ENCODE measurements at regions of chr4 and their contacts with region 1.

Region 1: DNA sequence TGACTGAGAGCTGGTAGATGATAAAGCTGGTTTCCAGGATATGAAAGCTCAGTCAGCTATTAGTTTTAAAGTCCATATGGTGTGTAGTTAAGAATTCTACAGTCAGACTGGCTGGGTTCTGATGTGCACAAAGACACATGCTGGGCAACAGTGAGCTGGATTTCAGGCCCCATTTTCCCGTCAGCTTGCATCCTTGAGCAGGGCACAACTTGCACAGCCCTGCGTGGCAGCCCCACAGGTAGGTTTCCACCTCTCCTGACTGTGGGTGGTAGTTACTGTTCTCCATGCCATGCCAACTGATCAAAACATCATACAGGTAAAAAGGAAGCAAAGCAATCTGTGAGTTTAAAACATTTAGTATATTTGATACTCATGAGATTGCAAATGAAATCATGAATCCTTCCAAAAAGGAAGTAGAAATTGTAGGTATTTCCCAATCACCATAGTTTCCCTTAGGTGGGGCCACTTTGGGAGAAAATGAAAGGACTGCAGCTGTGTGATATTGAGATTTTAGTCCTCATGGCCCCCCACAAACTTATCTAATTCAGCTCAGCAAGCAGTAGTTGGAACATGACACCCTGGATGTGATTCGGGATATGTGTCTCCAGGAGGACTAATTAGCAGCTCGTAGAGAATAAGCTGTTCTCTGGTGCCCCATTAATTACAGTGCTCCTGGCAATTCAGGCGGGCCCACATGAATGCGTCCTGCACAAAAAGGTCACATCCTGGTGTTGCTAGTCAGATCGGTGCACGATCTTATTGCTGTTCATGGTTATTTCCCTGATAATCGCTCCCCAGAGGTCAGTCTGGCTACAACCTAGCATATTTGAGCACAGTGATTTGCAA is 42.4 kb upstream of the NOCT start:
- DNase-seq: no peak
- H3K4me3 ChIP-seq: no peak overlapping the region
- H3K27ac ChIP-seq: no peak overlapping the region
- H3K4me1 ChIP-seq: 0 out of 2 replicates have a peak, but pooled peaks cover 3% of the 10 kb centered on the region
- H3K27me3 ChIP-seq: no peaks in the 10 kb centered on the region
- CTCF ChIP-seq: no peak

Region 2: GRCh38 chr4:139167774-139168444 is 194.7 kb after region 1 on chr4:
- CTCF ChIA-PET with region 1: no interaction called
- POLR2A ChIA-PET with region 1: interaction called, 10 read pairs
- intact Hi-C with region 1: no loop called
- DNase-seq: peak; percentile 11 to 69
- H3K4me3 ChIP-seq: no peak overlapping the region
- H3K27ac ChIP-seq: no peak overlapping the region
- H3K4me1 ChIP-seq: peaks cover 15% of the 10 kb centered on the region
- H3K27me3 ChIP-seq: no peaks in the 10 kb centered on the region
- CTCF ChIP-seq: peak; percentile 63